Panc1 (cell line): ENCODE measurements at regions of chr4 and their contacts with region 1.

Region 1: GRCh38 chr4:112109186-112110058 is 35.8 kb upstream of the FAM241A start:
- DNase-seq: no peak
- ATAC-seq: no peak
- H3K4me3 ChIP-seq: no peak overlapping the region
- H3K27ac ChIP-seq: no peak overlapping the region
- H3K4me1 ChIP-seq: no peaks in the 10 kb centered on the region
- H3K27me3 ChIP-seq: no peaks in the 10 kb centered on the region
- CTCF ChIP-seq: no peak

Region 2: DNA sequence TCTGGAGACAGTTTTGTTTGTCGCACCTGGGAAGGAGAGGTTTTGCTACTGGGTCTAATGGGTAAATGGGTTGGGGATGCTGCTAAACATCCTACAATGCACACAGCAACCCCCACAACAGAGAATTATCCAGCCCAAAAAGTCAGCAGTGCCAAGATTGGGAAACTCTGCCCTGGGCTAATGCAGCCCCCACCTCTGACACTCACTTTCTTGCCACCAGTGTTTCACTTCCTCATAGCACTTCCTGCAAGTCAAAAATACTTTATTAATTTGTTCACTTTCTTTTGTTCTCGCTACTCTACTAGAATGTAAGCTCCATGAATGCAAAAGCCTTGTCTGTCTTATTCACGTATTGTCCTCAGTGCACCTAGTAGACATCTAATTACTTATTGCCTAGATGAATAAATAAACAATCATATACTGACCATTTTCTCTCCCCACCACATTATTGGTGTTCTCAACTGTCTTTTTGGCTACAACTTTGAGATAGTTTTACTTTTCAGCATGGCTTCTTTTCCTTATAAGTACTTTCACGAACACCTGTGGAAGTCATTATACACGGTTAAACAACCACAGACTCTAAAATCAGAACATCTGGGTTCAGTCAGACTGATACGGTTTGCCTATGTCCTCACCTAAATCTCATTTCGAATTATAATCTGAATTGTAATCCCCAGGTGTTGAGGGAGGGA is 1404.5 kb before region 1 on chr4:
- CTCF ChIA-PET with region 1: no interaction called
- POLR2A ChIA-PET with region 1: interaction called, 10 read pairs
- in situ Hi-C with region 1: no loop called
- intact Hi-C with region 1: no loop called
- DNase-seq: no peak
- ATAC-seq: no peak
- H3K4me3 ChIP-seq: no peak overlapping the region
- H3K27ac ChIP-seq: no peak overlapping the region
- H3K4me1 ChIP-seq: no peaks in the 10 kb centered on the region
- H3K27me3 ChIP-seq: no peaks in the 10 kb centered on the region
- CTCF ChIP-seq: no peak

Region 3: DNA sequence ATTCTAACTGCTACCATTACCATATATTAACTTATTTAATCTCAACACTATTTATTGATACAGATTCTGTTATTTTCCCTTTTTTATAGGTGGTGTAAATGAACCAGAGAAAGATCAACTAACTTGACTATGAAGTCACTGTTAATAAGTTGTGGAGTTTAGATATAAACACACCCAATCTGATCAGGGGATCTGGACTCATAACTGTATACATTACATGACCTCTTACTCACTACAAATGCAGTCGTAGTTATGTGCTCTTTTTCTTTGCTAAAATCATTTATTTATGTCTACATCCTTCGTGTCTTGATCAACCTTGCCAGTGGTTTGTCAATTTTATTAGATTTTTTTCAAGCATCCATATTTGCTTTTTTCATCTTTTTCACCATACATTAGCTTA is 579.0 kb before region 1 on chr4:
- CTCF ChIA-PET with region 1: no interaction called
- POLR2A ChIA-PET with region 1: no interaction called
- in situ Hi-C with region 1: no loop called
- intact Hi-C with region 1: no loop called
- DNase-seq: no peak
- ATAC-seq: no peak
- H3K4me3 ChIP-seq: no peak overlapping the region
- H3K27ac ChIP-seq: no peak overlapping the region
- H3K4me1 ChIP-seq: no peaks in the 10 kb centered on the region
- H3K27me3 ChIP-seq: no peaks in the 10 kb centered on the region
- CTCF ChIP-seq: no peak